HEK293 (cell line): ENCODE measurements at regions of chr10 and their contacts with region 1.

Region 1: DNA sequence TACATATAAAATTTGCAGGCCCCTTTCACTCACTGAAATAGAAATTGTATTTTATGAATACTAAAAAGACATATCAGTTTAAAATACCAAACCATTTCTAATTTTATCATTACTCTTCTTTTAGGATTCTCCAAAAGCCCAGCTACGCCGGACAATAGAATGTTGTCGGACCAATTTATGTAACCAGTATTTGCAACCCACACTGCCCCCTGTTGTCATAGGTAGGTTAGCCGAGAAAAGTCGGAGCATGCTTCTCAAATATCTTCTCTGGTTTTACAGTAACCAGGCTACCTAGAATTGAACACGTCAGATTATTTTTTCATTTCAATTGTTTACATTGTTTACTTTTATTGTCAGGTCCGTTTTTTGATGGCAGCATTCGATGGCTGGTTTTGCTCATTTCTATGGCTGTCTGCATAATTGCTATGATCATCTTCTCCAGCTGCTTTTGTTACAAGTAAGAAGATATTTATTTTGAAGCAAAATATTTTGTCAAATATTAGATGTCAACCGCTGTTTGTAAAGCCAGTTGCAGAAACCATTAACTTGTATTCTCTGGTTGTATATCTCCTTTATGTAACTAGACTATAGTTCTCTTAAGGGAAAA is 57.6 kb downstream of the MMRN2 start:
- H3K4me3 ChIP-seq: no peak overlapping the region
- H3K27ac ChIP-seq: no peak overlapping the region
- H3K4me1 ChIP-seq: no peaks in the 10 kb centered on the region
- CTCF ChIP-seq: peak; percentile 28; the same call in 1 of the 2 replicates

Region 2: GRCh38 chr10:86693721-86694369 is 205.9 kb before region 1 on chr10:
- CTCF ChIA-PET with region 1: interaction called, 34 read pairs
- POLR2A ChIA-PET with region 1: no interaction called
- H3K4me3 ChIP-seq: no peak overlapping the region
- H3K27ac ChIP-seq: no peak overlapping the region
- H3K4me1 ChIP-seq: no peaks in the 10 kb centered on the region
- CTCF ChIP-seq: peak; percentile 49; the same call in 1 of the 2 replicates

Region 3: DNA sequence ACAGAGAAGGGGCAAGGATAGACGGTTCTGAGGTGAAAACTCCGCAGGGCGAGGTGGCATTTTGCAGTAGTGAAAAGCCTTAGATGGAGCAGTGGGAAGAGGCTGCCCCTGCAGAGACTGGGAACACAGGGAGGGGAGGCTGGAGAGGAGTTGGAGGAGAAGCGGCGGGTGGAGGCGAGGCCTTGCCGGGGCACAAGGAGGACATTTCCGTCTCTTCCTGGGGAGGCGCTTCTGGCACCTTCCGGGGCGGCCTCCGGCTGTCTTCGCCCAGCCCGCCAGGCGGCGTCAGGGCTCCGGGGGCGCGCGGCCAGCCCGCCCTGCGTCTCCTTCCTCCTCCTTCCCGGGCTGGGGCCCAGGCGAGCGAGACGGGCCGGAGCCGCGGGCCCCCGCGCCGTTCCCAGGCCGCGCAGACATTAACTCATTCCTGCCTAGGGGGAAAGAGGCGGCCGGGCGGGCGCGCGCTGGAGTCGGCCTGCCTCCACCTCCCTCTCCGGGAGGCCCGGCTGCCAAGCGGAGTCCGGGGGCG is 188.7 kb before region 1 on chr10:
- CTCF ChIA-PET with region 1: interaction called, 10 read pairs
- POLR2A ChIA-PET with region 1: no interaction called
- H3K4me3 ChIP-seq: peak overlapping the region; percentile 60
- H3K27ac ChIP-seq: peak overlapping the region; percentile 99
- H3K4me1 ChIP-seq: peaks cover 8% of the 10 kb centered on the region; the same call in 1 of the 2 replicates
- CTCF ChIP-seq: peak; percentile 97

Region 4: DNA sequence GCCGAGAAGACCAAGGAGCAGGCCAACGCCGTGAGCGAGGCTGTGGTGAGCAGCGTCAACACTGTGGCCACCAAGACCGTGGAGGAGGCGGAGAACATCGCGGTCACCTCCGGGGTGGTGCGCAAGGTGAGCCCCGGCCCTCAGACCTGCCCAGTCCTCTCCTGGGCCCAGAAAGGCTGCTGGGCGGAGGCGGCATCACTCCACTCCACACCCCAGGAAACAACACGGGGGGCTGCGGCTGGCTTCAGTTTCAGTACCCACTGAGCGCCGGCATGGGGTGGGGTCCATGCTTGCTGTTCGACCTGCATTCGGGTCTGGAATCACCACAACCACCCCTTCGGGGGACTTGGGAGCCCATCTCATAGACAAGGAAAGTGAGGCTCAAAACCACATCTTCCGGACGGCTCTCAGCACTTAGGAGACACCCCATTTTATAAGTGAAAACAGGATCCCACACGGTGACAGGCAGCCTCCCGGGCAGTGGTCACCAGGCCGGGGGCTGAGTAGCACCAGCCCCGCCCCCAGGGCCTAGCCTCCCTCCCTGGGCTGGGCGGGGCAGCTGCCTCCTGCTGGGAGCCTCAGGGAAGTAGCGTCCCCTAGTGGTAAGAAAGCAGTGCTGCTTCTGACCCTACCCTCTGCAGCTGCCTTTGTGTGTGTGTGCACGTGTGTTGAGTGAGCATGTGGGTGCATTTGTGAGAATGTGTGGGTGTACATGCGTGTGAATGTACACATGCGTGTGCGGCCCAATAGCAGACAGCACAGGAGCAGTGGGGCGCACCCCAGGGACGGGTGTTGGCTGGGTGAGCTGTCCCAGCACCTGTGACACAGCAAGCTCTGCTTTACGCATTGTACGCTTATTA is 60.5 kb after region 1 on chr10:
- CTCF ChIA-PET with region 1: no interaction called
- POLR2A ChIA-PET with region 1: no interaction called
- H3K4me3 ChIP-seq: no peak overlapping the region
- H3K27ac ChIP-seq: no peak overlapping the region
- H3K4me1 ChIP-seq: no peaks in the 10 kb centered on the region
- CTCF ChIP-seq: peak; percentile 81